CD8-positive, alpha-beta T cell (primary cell): ENCODE measurements at regions of chr16 and their contacts with region 1.

Region 1: GRCh38 chr16:30941600-30942425 is 7.1 kb upstream of the ORAI3 start:
- DNase-seq: peak; percentile 34 to 84 (median 62)
- ATAC-seq: peak; percentile 97
- H3K4me3 ChIP-seq: peak overlapping the region in 1 of 2 experiments; percentile 26
- H3K4me3 Mint-ChIP-seq: no peak overlapping the region
- H3K27ac ChIP-seq: peak overlapping the region in 1 of 2 experiments; percentile 9
- H3K27ac Mint-ChIP-seq: no peak overlapping the region
- H3K4me1 ChIP-seq: peaks cover 10% of the 10 kb centered on the region
- H3K4me1 Mint-ChIP-seq: peaks cover 12% of the 10 kb centered on the region
- H3K27me3 ChIP-seq: no peaks in the 10 kb centered on the region
- H3K27me3 Mint-ChIP-seq: no peaks in the 10 kb centered on the region
- CTCF ChIP-seq: peak; percentile 80

Region 2: DNA sequence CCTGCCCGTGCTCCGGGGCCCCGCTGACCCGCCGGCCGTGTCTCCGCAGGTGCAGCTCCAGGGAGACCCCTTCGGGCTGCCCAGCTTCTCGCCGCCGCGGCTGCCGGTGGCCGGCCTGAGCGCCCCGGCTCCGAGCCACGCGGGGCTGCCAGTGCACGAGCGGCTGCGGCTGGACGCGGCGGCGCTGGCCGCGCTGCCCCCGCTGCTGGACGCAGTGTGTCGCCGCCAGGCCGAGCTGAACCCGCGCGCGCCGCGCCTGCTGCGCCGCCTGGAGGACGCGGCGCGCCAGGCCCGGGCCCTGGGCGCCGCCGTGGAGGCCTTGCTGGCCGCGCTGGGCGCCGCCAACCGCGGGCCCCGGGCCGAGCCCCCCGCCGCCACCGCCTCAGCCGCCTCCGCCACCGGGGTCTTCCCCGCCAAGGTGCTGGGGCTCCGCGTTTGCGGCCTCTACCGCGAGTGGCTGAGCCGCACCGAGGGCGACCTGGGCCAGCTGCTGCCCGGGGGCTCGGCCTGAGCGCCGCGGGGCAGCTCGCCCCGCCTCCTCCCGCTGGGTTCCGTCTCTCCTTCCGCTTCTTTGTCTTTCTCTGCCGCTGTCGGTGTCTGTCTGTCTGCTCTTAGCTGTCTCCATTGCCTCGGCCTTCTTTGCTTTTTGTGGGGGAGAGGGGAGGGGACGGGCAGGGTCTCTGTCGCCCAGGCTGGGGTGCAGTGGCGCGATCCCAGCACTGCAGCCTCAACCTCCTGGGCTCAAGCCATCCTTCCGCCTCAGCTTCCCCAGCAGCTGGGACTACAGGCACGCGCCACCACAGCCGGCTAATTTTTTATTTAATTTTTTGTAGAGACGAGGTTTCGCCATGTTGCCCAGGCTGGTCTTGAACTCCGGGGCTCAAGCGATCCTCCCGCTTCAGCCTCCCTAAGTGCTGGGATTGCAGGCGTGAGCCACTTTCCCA is 39.5 kb before region 1 on chr16:
- CTCF ChIA-PET with region 1: interaction called, 15 read pairs
- POLR2A ChIA-PET with region 1: no interaction called
- intact Hi-C with region 1: no loop called
- DNase-seq: peak in 8 of 9 experiments; percentile 42 to 82 (median 56)
- ATAC-seq: peak; percentile 81
- H3K4me3 ChIP-seq: peak overlapping the region; percentile 52 to 77
- H3K4me3 Mint-ChIP-seq: peak overlapping the region; percentile 95
- H3K27ac ChIP-seq: peak overlapping the region; percentile 74 to 75
- H3K27ac Mint-ChIP-seq: peak overlapping the region; percentile 97
- H3K4me1 ChIP-seq: peaks cover 33% of the 10 kb centered on the region
- H3K4me1 Mint-ChIP-seq: peaks cover 36% of the 10 kb centered on the region
- H3K27me3 ChIP-seq: no peaks in the 10 kb centered on the region
- H3K27me3 Mint-ChIP-seq: no peaks in the 10 kb centered on the region
- CTCF ChIP-seq: no peak

Region 3: DNA sequence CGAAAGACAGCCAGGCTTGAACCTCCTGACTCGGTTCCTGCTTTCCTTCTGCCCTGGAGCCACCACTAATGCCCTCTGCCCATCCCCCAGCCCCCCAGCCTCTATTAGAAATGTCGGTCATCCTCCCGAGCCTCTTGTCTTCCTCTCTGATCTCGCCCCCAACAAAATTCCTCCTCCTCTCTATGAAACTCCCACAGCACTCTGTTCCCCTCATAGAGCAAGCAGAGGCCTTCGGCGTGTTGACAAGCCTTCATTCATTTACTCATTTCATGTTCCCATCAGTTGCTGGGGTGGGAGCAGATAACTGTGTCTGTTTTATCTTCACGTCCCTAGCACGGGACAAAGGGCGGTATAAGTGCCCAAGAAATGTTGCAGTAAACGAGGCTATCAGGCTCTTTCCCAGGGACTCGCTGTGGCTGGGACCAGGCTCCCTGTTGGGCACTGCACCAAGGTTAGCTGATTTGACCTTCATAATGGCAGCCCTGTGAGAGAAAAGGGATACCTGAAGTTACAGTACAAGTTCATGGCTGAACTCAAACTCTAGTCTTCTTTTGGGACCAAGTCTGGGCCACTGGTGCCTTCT is 10.7 kb before region 1 on chr16:
- CTCF ChIA-PET with region 1: interaction called, 10 read pairs
- POLR2A ChIA-PET with region 1: no interaction called
- intact Hi-C with region 1: no loop called
- DNase-seq: no peak
- ATAC-seq: no peak
- H3K4me3 ChIP-seq: no peak overlapping the region
- H3K4me3 Mint-ChIP-seq: no peak overlapping the region
- H3K27ac ChIP-seq: no peak overlapping the region
- H3K27ac Mint-ChIP-seq: no peak overlapping the region
- H3K4me1 ChIP-seq: peaks cover 6% of the 10 kb centered on the region
- H3K4me1 Mint-ChIP-seq: peaks cover 10% of the 10 kb centered on the region
- H3K27me3 ChIP-seq: no peaks in the 10 kb centered on the region
- H3K27me3 Mint-ChIP-seq: no peaks in the 10 kb centered on the region
- CTCF ChIP-seq: no peak

Region 4: DNA sequence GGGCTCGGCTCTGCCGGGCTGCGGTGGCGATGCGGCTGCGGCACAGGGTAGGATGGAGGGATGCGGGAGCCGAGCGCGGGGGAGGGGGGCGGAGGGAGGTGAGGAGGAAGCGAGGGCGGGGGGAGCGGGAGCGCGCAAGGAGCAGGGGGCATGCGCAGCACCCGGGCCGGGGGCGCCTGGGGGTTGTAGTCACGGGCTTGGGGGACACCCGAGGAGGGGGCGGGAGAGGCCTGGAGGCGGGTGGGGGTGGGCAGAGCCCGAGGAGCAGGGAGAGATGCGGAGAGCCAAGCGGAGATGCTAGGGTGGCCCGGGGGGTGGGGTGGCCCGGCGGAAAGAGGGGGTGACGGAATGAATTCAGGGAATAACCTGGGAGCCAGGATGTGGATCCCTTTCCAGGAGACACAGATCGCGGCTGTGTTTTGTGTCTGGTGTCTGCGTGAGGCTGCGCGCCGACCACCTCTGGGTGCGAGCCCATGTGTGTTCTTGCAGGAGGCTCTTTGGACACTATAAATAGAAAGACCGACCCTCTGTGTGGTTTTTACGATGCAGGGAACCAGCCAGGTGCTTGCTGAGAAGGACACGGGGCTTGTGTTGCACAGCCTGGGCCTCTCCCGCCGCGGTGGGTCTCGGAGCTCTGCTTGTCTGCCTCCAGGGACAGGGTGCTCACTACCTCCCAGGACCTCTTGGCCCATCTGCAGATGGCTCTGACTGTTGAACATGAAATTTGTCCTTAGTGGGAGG is 68.9 kb after region 1 on chr16 and contains the start of gene STX1B:
- CTCF ChIA-PET with region 1: no interaction called
- POLR2A ChIA-PET with region 1: no interaction called
- intact Hi-C with region 1: no loop called
- DNase-seq: peak in 8 of 9 experiments; percentile 42 to 73 (median 62)
- ATAC-seq: peak; percentile 86
- H3K4me3 ChIP-seq: peak within 1 kb of the TSS; percentile 35 to 61
- H3K4me3 Mint-ChIP-seq: peak within 1 kb of the TSS; percentile 84
- H3K27ac ChIP-seq: no peak within 1 kb of the TSS
- H3K27ac Mint-ChIP-seq: no peak within 1 kb of the TSS
- H3K4me1 ChIP-seq: peaks cover 7% of the 10 kb centered on the region
- H3K4me1 Mint-ChIP-seq: peaks cover 19% of the 10 kb centered on the region
- H3K27me3 ChIP-seq: peaks cover 3 to 17% of the 10 kb centered on the region in 2 experiments
- H3K27me3 Mint-ChIP-seq: peaks cover 21% of the 10 kb centered on the region
- CTCF ChIP-seq: no peak
- total RNA-seq, gene STX1B: 2.3 to 2.7 TPM

Region 5: DNA sequence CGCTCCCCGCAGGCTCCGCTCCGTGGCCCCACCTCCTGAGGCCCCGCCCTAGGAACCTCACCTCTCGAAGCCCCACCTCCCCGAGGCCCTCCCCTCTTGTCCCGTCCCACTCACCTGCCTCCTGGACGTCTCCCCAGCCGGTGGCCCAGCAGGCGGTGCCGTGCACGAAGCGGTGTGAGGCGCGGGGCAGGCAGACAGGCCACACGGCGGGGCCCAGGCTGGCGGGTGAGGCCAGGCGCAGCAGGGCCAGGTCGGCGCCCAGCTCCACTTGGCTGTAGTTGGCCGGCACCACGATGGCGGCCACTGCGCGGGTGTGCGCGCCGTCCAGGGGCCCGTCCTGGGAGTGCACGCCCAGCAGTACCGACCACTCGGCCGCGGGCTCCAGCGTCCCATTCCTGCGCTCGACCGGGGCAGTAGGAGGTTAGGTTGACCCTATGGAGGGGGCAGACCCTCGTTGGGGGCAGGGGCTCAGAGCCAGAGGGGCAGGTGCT is 206.5 kb after region 1 on chr16:
- CTCF ChIA-PET with region 1: no interaction called
- POLR2A ChIA-PET with region 1: no interaction called
- intact Hi-C with region 1: no loop called
- DNase-seq: no peak
- ATAC-seq: no peak
- H3K4me3 ChIP-seq: no peak overlapping the region
- H3K4me3 Mint-ChIP-seq: no peak overlapping the region
- H3K27ac ChIP-seq: no peak overlapping the region
- H3K27ac Mint-ChIP-seq: no peak overlapping the region
- H3K4me1 ChIP-seq: peaks cover 1% of the 10 kb centered on the region
- H3K4me1 Mint-ChIP-seq: peaks cover 6% of the 10 kb centered on the region
- H3K27me3 ChIP-seq: no peaks in the 10 kb centered on the region
- H3K27me3 Mint-ChIP-seq: peaks cover 2% of the 10 kb centered on the region
- CTCF ChIP-seq: no peak